ENCODE measurements at regions of chr5 and their contacts with region 1.

Region 1: DNA sequence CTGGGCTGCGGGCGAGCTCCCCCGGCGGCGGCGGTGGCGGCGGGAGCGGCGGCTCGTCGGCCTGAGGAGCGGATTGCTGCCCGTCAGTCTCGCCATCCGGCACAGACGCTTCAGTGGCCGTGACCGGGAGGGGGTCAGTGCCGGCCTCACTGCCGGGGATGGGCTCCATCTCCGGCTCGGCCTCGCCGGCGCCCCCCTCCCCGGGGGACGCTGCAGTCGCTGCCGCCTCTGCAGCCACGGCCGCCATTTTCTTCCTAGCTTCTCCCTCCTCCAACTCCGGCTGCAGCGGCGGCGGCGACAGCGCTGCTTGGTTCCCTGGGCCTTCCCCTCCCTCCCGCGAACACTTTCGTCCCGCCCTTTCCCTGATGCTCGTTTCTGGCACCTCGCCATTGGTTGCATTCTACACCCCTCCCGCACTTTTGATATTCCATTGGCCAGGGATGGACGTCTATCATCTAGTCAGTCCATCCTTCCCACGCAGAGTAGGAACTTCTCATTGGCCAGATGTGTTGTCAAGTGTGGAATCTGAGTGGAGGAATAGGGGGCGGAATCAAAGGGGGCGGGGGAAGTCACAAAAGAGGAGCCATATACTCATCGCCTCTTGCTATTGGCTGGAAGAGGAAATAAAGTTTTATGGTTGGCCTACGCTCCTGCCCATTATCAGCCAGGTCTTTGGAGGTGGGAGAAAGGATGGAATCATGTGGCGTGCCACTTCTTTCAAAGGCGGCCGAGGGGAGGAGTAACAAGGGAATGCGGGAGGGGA is at the start of gene PWWP2A:
- DNase-seq: peak; percentile 100
- H3K4me3 ChIP-seq: peak within 1 kb of the TSS; percentile 90 to 99 (median 93)
- H3K27ac ChIP-seq: peak within 1 kb of the TSS; percentile 95 to 100 (median 96)
- H3K4me1 ChIP-seq: peaks cover 0 to 22% (median 11%) of the 10 kb centered on the region in 4 donors
- H3K27me3 ChIP-seq: no peaks in the 10 kb centered on the region
- CTCF ChIP-seq: no peak
- EP300 ChIP-seq: no peak
- POLR2A ChIP-seq: peak; percentile 73 to 74
- total RNA-seq, gene PWWP2A: 24.8 to 33.2 (median 29.1) TPM

Region 2: DNA sequence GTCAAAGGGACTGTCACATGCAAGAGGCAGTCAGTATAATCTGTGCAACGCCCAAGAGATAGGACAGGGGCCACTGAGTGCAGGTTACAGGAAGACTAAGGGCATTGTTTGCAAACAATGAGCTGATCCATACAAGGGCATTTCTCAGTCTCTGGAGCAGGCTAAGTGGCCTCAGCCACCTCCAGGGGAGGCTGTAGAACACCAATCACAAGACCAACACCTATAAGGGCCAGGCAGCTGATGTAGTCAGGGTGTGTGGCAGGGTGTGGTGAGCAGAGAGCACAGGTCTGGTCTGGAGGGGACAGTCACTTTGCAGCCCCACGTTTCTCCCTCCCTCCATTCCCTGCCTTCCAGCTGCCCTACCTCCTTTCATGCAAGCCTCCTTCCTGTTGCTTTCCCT is 286.2 kb before region 1 on chr5:
- intact Hi-C with region 1: no loop called
- DNase-seq: no peak
- H3K4me3 ChIP-seq: no peak overlapping the region
- H3K27ac ChIP-seq: no peak overlapping the region
- H3K4me1 ChIP-seq: no peaks in the 10 kb centered on the region
- H3K27me3 ChIP-seq: no peaks in the 10 kb centered on the region
- CTCF ChIP-seq: no peak
- EP300 ChIP-seq: no peak
- POLR2A ChIP-seq: no peak

Region 3: DNA sequence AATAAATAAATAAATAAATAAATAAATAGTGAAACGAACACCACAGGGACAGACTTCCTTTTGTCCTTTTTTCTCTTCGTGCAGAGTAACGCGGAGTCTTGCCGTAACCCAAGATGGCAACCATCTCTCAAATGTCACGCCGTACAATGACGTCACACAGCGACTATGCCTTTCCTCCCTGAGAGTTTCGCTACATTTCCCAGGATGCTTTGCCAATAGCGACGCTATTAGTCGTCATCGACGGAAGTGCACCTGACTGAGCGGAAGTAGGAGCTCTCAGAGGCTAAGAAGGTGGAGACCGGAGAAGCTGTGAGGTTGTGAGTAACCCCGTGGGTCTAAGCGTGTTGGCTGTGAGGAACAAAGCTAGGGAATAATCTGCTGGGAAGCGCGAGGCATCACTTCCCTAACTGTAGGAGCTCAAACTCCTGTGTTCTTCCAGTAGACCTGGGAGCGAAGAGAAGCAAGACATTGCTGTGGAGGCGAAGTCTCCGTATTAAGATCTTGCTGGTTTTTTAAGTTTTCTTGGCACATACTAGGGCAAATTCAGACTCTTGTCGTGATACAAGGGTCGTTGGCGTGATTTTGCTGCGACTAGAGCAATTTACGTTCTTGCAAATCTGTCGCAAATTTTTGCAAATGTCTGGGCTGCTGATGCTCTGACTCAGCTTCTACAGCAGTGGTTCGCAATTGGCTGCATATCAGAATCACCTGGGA is 110.3 kb before region 1 on chr5 and contains the start of gene TTC1:
- intact Hi-C with region 1: loop called (anchors 1 kb)
- DNase-seq: peak; percentile 98
- H3K4me3 ChIP-seq: peak within 1 kb of the TSS; percentile 66 to 90 (median 80)
- H3K27ac ChIP-seq: peak within 1 kb of the TSS; percentile 85 to 91 (median 86)
- H3K4me1 ChIP-seq: peaks cover 0 to 20% (median 17%) of the 10 kb centered on the region in 4 donors
- H3K27me3 ChIP-seq: no peaks in the 10 kb centered on the region
- CTCF ChIP-seq: no peak
- EP300 ChIP-seq: peak in 2 of 4 donors; percentile 25 to 71
- POLR2A ChIP-seq: peak; percentile 73 to 85
- total RNA-seq, gene TTC1: 38.3 to 65.0 (median 50.9) TPM

Region 4: DNA sequence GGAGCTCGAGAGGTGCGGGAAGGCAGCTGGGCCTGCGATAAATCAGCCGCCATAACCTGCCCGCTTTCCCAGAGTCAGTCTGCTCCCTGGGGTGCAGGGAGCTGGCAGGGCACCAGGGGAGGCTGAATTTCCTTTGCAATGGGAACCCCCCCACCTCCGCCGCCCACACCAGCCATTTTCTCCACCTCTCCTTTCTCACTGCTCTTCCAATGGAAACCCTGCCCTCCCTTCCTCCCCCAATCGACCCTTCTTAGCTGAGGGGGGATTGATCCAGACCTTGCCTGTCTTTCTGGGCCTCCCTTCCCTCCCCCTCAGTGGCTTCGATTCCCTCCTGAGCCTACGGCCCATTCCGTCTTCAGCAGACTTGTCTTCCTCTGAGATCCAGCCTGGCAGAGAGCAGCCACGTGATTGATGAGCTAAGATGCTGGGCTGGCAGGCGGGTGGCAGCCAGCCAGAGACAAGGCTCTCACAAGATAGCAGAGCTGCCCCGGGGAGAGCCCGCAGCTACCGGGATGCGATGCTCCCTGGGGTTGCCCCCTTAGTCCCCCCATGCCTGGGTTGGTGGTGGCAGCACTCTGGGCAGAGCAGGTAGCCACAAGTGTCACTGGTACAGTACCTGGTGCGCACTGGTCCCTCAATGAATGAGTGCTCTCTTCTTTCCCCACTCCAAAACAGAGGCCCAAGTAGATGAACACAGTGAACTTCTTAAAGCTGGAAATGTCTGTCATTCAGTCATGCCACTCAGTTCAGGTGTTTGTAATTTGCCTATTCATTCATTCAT is 56.3 kb after region 1 on chr5:
- intact Hi-C with region 1: no loop called
- DNase-seq: peak; percentile 68
- H3K4me3 ChIP-seq: peak overlapping the region in 1 of 4 donors; percentile 11
- H3K27ac ChIP-seq: peak overlapping the region in 3 of 4 donors; percentile 8 to 39 (median 14)
- H3K4me1 ChIP-seq: peaks cover 0 to 17% (median 10%) of the 10 kb centered on the region in 4 donors
- H3K27me3 ChIP-seq: no peaks in the 10 kb centered on the region
- CTCF ChIP-seq: no peak
- EP300 ChIP-seq: no peak
- POLR2A ChIP-seq: no peak

Region 5: GRCh38 chr5:160188142-160189015 is 69.1 kb after region 1 on chr5:
- intact Hi-C with region 1: loop called (anchors 5 kb)
- DNase-seq: peak; percentile 75
- H3K4me3 ChIP-seq: peak overlapping the region; percentile 28 to 56 (median 51)
- H3K27ac ChIP-seq: peak overlapping the region; percentile 3 to 69 (median 64)
- H3K4me1 ChIP-seq: peaks cover 0 to 16% (median 4%) of the 10 kb centered on the region in 4 donors
- H3K27me3 ChIP-seq: no peaks in the 10 kb centered on the region
- CTCF ChIP-seq: no peak
- EP300 ChIP-seq: no peak
- POLR2A ChIP-seq: no peak

Region 6: GRCh38 chr5:160399402-160400353 is 280.4 kb after region 1 on chr5 and contains the start of gene FAM200C:
- intact Hi-C with region 1: loop called (anchors 5 kb)
- DNase-seq: peak; percentile 96
- H3K4me3 ChIP-seq: peak within 1 kb of the TSS; percentile 64 to 73 (median 72)
- H3K27ac ChIP-seq: peak within 1 kb of the TSS; percentile 89 to 92 (median 90)
- H3K4me1 ChIP-seq: peaks cover 0 to 36% (median 27%) of the 10 kb centered on the region in 4 donors
- H3K27me3 ChIP-seq: no peaks in the 10 kb centered on the region
- CTCF ChIP-seq: no peak
- EP300 ChIP-seq: peak in 1 of 4 donors; percentile 7
- POLR2A ChIP-seq: peak; percentile 94 to 96
- total RNA-seq, gene FAM200C: 4.3 to 12.3 (median 8.1) TPM

Region 7: DNA sequence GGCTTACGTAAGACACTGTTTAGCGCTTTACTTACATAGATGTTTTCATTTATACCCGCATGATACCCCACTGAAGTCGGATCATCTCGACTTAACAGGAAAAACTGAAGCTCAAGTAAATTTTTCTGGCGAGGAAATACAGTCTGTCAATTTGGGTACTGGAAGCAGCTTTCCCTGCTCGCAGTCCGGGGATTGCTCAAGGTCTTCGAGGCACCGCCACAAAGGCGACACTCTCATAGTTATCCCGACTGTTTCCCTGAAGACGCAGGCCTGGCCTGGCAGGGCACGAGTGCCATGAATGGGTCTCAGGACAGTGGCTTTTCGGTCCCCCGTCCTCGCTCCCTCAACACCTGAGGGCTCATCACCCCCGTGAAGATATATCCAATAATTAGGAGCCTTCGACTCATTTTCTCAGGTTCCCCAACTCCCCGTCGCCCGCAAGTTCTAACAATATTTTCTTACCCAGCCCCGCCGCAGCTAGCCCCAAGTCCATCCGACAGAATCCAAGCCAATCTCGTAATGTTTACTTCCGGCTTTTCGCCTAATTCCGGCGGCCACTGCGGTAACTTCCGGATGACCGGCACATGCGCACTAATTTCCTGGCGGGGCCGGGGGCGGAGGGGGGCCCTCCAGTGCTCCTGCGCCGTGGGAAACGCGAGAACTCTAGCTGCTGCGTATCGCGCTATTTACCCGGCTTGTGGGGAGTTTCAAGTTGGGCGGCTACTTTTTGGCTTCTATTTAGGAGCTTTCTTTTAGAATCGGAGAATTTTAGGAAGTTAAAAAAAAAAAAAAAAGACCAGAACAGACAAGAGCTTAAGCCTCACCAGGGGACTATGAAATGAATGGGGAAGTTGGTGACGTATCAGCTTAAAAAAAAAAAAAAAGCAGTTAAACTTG is 299.5 kb after region 1 on chr5 and contains the start of gene SLU7:
- intact Hi-C with region 1: loop called (anchors 5 kb)
- DNase-seq: peak; percentile 98
- H3K4me3 ChIP-seq: peak within 1 kb of the TSS; percentile 76 to 91 (median 88)
- H3K27ac ChIP-seq: peak within 1 kb of the TSS; percentile 88 to 90 (median 88)
- H3K4me1 ChIP-seq: peaks cover 0 to 40% (median 32%) of the 10 kb centered on the region in 4 donors
- H3K27me3 ChIP-seq: no peaks in the 10 kb centered on the region
- CTCF ChIP-seq: no peak
- EP300 ChIP-seq: no peak
- POLR2A ChIP-seq: peak; percentile 38 to 62
- total RNA-seq, gene SLU7: 22.4 to 80.3 (median 65.6) TPM